OCI-LY7 (cell line): ENCODE measurements at regions of chr1 and their contacts with region 1.

Region 1: DNA sequence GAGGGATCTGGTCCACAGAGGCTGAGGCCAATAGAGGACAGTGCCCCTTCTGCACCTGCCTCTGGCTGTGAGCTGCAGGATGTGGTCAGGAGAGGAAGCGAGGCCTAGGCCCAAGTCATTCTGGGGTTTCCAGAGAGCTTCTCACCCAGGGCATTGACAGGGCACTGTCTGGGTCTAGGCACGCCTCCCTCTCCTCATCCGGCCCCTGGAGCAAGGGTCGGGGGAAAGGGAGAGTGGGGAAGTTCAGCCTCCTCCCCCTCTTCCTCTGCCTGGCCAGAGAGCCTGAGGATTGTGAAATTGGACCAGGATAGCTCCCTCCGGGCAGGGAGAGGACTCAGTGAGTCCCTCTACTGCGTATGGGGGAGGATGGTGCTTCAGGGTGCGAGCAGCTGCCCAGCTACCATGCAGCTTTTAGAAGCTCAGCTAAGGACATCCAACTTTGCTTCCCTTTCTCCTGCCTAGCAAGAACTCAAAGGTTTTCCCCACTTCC is 6.3 kb upstream of the INAVA start:
- DNase-seq: peak; percentile 43
- H3K4me3 ChIP-seq: no peak overlapping the region
- H3K27ac ChIP-seq: no peak overlapping the region
- H3K4me1 ChIP-seq: peaks cover 5% of the 10 kb centered on the region
- CTCF ChIP-seq: no peak

Region 2: GRCh38 chr1:200877839-200878551 is 10.4 kb before region 1 on chr1:
- CTCF ChIA-PET with region 1: interaction called, 3 read pairs
- POLR2A ChIA-PET with region 1: interaction called, 16 read pairs
- intact Hi-C with region 1: no loop called
- DNase-seq: no peak
- H3K4me3 ChIP-seq: no peak overlapping the region
- H3K27ac ChIP-seq: no peak overlapping the region
- H3K4me1 ChIP-seq: no peaks in the 10 kb centered on the region
- CTCF ChIP-seq: no peak